Gastrocnemius medialis (tissue), 4 donors: ENCODE measurements at regions of chr2 and their contacts with region 1.

Region 1: GRCh38 chr2:210617732-210618330 is 61.4 kb downstream of the CPS1 start:
- DNase-seq: no peak
- ATAC-seq: peak in 1 of 2 donors; percentile 52
- H3K4me3 ChIP-seq: no peak overlapping the region
- H3K27ac ChIP-seq: no peak overlapping the region
- H3K4me1 ChIP-seq: no peaks in the 10 kb centered on the region
- H3K27me3 ChIP-seq: no peaks in the 10 kb centered on the region
- CTCF ChIP-seq: peak in 4 of 5 experiments; percentile 27 to 54 (median 36)
- POLR2A ChIP-seq: no peak

Region 2: GRCh38 chr2:210593166-210593565 is 24.7 kb before region 1 on chr2:
- in situ Hi-C with region 1: no loop called
- intact Hi-C with region 1: no loop called
- DNase-seq: no peak
- ATAC-seq: no peak
- H3K4me3 ChIP-seq: no peak overlapping the region
- H3K27ac ChIP-seq: no peak overlapping the region
- H3K4me1 ChIP-seq: no peaks in the 10 kb centered on the region
- H3K27me3 ChIP-seq: no peaks in the 10 kb centered on the region
- CTCF ChIP-seq: no peak
- POLR2A ChIP-seq: no peak

Region 3: GRCh38 chr2:210663631-210664089 is 45.8 kb after region 1 on chr2:
- in situ Hi-C with region 1: no loop called
- intact Hi-C with region 1: no loop called
- DNase-seq: no peak
- ATAC-seq: no peak
- H3K4me3 ChIP-seq: no peak overlapping the region
- H3K27ac ChIP-seq: no peak overlapping the region
- H3K4me1 ChIP-seq: no peaks in the 10 kb centered on the region
- H3K27me3 ChIP-seq: no peaks in the 10 kb centered on the region
- CTCF ChIP-seq: no peak
- POLR2A ChIP-seq: no peak

Region 4: GRCh38 chr2:211035548-211036185 is 417.8 kb after region 1 on chr2:
- in situ Hi-C with region 1: loop called in 1 of 4 experiments (anchors 25 kb)
- intact Hi-C with region 1: loop called (anchors 2 kb)
- DNase-seq: no peak
- ATAC-seq: no peak
- H3K4me3 ChIP-seq: no peak overlapping the region
- H3K27ac ChIP-seq: no peak overlapping the region
- H3K4me1 ChIP-seq: no peaks in the 10 kb centered on the region
- H3K27me3 ChIP-seq: no peaks in the 10 kb centered on the region
- CTCF ChIP-seq: peak in 2 of 5 experiments; percentile 34 to 37
- POLR2A ChIP-seq: no peak

Region 5: DNA sequence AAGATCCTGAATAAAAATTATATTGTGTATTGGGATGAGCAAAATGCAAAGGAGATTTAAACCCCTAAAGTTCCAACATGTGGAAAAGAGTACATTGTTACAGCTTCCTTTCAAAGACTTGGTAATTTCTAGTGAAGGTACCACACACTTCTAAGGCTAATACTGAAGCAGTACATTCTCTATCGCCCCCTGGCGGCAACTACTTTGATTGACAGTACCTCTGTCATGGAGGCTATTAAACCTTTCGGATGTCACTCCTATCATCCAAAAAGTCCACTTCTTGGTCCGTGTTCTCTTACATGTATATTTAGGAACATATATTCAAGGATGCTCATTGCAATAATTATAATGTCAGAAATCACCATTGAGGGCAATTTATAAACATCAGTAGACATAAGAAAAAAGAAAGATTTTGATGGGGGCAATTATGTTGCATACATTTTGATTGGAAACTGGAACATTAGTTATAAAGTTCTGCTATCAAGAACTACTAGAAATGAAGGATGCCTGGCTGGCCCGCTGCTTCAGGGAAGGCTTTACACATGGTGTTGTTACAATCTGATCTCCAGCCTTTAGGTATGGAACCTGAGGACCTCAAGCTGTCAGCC is 540.1 kb after region 1 on chr2:
- in situ Hi-C with region 1: no loop called
- intact Hi-C with region 1: loop called (anchors 5 kb)
- DNase-seq: peak; percentile 24 to 39
- ATAC-seq: peak; percentile 42 to 68
- H3K4me3 ChIP-seq: no peak overlapping the region
- H3K27ac ChIP-seq: no peak overlapping the region
- H3K4me1 ChIP-seq: no peaks in the 10 kb centered on the region
- H3K27me3 ChIP-seq: no peaks in the 10 kb centered on the region
- CTCF ChIP-seq: peak; percentile 39 to 81 (median 68)
- POLR2A ChIP-seq: no peak